IMR-90 (cell line): ENCODE measurements at regions of chr1 and their contacts with region 1.

Region 1: GRCh38 chr1:176033881-176034280 is 173.2 kb downstream of the COP1 start:
- DNase-seq: peak; percentile 36
- ATAC-seq: no peak; the same call in 1 of the 2 replicates
- H3K4me3 ChIP-seq: no peak overlapping the region
- H3K27ac ChIP-seq: peak overlapping the region; percentile 57; the same call in 1 of the 2 replicates
- H3K4me1 ChIP-seq: peaks cover 9% of the 10 kb centered on the region
- H3K27me3 ChIP-seq: no peaks in the 10 kb centered on the region
- CTCF ChIP-seq: no peak
- POLR2A ChIP-seq: no peak
- RAD21 ChIP-seq: no peak

Region 2: GRCh38 chr1:175978476-175978875 is 55.4 kb before region 1 on chr1:
- CTCF ChIA-PET with region 1: no interaction called
- POLR2A ChIA-PET with region 1: no interaction called
- dilution Hi-C with region 1: no loop called
- in situ Hi-C with region 1: no loop called
- intact Hi-C with region 1: loop called (anchors 5 kb)
- DNase-seq: peak; percentile 34
- ATAC-seq: no peak; the same call in 1 of the 2 replicates
- H3K4me3 ChIP-seq: no peak overlapping the region
- H3K27ac ChIP-seq: no peak overlapping the region
- H3K4me1 ChIP-seq: peaks cover 6% of the 10 kb centered on the region
- H3K27me3 ChIP-seq: no peaks in the 10 kb centered on the region
- CTCF ChIP-seq: no peak
- POLR2A ChIP-seq: no peak
- RAD21 ChIP-seq: no peak

Region 3: GRCh38 chr1:176271572-176271971 is 237.7 kb after region 1 on chr1:
- CTCF ChIA-PET with region 1: no interaction called
- POLR2A ChIA-PET with region 1: no interaction called
- dilution Hi-C with region 1: no loop called
- in situ Hi-C with region 1: no loop called
- intact Hi-C with region 1: no loop called
- DNase-seq: no peak
- ATAC-seq: no peak
- H3K4me3 ChIP-seq: no peak overlapping the region
- H3K27ac ChIP-seq: no peak overlapping the region
- H3K4me1 ChIP-seq: no peaks in the 10 kb centered on the region
- H3K27me3 ChIP-seq: no peaks in the 10 kb centered on the region
- CTCF ChIP-seq: no peak
- POLR2A ChIP-seq: no peak
- RAD21 ChIP-seq: no peak